ENCODE measurements at regions of chr12 and their contacts with region 1.

Region 1: DNA sequence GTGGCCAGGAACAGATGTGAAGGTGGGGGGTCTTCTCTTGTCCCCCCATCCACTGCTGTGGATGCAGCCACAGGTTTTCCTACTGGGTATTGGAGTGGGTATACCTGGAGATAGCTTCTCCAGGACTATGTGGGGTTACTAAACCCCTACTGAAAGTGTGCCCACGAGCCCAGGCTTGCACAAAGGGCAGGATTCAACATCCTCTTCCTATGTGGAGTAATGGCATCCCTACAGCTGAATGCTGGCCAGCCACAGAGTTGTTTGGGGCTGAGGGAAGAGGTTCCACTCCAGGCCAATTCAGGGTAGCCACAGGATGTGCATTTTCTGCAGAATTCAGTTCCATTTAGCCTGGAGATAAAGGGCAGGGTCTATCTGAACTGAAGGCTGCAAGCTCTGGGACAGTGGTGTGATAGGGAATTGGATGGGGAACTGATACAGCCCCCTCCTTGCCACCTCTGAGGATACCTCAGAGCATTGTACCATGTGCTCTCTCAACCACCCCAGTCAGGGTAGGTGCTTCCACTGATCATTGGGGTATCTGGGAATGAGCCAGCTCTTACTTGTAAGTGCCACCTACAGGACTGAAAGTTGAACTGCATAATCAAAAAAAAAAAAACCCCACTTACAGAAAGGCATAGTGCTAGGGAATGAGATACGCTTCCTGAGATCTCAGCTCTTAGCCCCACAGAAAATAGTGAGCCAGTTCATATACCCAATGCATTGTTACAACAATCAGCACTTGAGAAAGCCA is 187.1 kb downstream of the KITLG start:
- DNase-seq: no peak
- H3K4me3 Mint-ChIP-seq: no peak overlapping the region
- H3K27ac Mint-ChIP-seq: no peak overlapping the region
- H3K4me1 Mint-ChIP-seq: peaks cover 5% of the 10 kb centered on the region
- H3K27me3 Mint-ChIP-seq: peaks cover 2% of the 10 kb centered on the region

Region 2: DNA sequence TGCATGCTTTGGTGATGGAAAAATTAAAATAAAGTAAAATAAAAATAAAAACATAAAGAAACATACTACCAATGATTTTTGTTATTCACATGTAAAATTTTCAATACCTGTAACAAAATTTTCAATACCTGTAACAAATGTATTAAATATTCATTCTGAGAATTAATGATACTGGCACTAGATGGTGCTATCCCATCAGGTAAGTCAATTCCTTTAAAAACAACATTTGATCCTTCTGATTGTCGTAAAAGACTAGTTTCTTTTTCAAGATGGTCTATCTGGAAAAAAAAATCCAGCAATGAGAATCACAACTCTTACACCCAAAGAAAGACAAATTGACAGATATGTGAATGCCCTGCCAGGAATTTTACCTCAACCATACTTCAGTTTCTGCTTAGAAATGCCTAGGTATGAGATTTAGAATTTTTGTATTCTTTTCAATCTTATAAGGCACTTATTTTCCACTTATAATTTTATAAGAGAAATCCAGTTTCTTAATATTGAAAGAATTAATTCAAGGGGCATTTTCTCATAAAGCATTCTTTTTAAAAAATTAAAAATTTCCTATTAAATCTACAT is 282.0 kb before region 1 on chr12:
- CTCF ChIA-PET with region 1: no interaction called
- POLR2A ChIA-PET with region 1: no interaction called
- intact Hi-C with region 1: loop called (anchors 2 kb)
- DNase-seq: no peak
- H3K4me3 Mint-ChIP-seq: no peak overlapping the region
- H3K27ac Mint-ChIP-seq: no peak overlapping the region
- H3K4me1 Mint-ChIP-seq: peaks cover 2% of the 10 kb centered on the region
- H3K27me3 Mint-ChIP-seq: no peaks in the 10 kb centered on the region

Region 3: GRCh38 chr12:88235183-88235833 is 157.9 kb before region 1 on chr12:
- CTCF ChIA-PET with region 1: no interaction called
- POLR2A ChIA-PET with region 1: no interaction called
- intact Hi-C with region 1: loop called (anchors 2 kb)
- DNase-seq: peak; percentile 52
- H3K4me3 Mint-ChIP-seq: no peak overlapping the region
- H3K27ac Mint-ChIP-seq: peak overlapping the region; percentile 72
- H3K4me1 Mint-ChIP-seq: peaks cover 27% of the 10 kb centered on the region
- H3K27me3 Mint-ChIP-seq: peaks cover 3% of the 10 kb centered on the region

Region 4: DNA sequence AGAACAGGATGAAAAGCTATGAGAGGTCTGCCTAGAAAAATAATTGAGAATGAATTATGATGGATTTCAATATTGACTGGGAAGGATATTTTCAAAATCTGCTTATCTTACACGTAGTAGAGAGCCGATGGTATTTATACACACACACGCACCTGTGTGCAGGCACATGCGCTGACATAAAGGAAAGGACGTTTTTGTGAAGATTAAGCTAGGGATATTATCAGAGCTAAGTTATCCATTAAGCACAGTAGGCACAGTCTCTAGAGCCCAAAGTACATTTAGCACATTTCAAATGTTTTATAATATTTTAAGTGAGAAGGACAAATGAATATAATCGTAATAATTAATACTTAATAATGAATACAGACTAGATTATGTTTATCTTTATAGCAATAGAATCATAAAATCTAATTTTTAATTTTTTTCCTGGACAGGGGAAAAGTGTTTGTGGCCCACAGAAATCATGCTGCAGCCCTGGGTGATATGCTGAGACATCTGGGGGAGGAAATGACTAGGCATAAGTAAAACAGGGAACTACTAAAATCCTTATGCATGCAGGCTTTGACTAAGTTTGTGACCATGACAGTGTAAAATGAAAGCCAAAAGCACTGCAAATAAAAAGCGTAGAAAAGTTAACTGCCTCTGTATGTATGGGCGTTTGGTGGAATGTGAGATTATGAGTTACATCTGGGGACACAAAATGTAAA is 41.0 kb after region 1 on chr12:
- CTCF ChIA-PET with region 1: no interaction called
- POLR2A ChIA-PET with region 1: no interaction called
- intact Hi-C with region 1: no loop called
- DNase-seq: no peak
- H3K4me3 Mint-ChIP-seq: no peak overlapping the region
- H3K27ac Mint-ChIP-seq: no peak overlapping the region
- H3K4me1 Mint-ChIP-seq: peaks cover 2% of the 10 kb centered on the region
- H3K27me3 Mint-ChIP-seq: no peaks in the 10 kb centered on the region

Region 5: DNA sequence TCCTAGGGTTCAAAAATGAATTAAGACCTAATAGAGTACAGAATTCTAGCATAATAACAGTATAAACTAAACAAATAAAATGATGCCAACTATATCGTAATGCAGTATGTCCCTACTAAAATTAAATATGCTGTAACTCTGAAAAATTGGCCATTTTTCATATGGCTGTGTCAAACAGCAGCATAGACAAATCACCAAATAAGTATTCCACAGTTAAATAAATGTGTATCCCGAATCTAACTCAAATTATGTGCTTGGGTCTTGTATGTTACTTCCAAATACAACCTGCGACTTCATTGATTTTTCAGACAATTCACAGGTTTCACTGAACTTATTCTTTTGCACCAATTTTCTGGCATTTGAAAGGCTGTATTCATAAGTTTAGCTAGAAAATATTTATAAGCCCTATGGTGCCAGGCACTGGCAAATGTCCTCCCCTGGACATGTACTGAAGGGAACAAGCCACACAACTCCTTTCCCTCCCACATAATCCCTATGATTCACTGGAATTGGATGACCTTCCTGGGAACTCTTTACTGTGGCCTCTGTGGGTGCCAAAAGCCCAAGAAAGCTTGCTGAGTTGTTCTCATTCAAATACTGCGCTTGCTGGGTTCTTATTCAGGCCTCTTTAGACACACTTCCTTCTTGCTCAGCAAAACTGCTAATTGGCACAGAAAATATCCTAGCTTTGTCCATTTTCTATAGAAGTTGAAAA is 78.3 kb after region 1 on chr12:
- CTCF ChIA-PET with region 1: no interaction called
- POLR2A ChIA-PET with region 1: no interaction called
- intact Hi-C with region 1: no loop called
- DNase-seq: no peak
- H3K4me3 Mint-ChIP-seq: no peak overlapping the region
- H3K27ac Mint-ChIP-seq: no peak overlapping the region
- H3K4me1 Mint-ChIP-seq: no peaks in the 10 kb centered on the region
- H3K27me3 Mint-ChIP-seq: no peaks in the 10 kb centered on the region

Measured in activated CD4-positive, alpha-beta memory T cell treated with anti-CD3 and anti-CD28 coated beads for 36 hours (primary cell).